ENCODE measurements at regions of chr4 and their contacts with region 1.

Region 1: DNA sequence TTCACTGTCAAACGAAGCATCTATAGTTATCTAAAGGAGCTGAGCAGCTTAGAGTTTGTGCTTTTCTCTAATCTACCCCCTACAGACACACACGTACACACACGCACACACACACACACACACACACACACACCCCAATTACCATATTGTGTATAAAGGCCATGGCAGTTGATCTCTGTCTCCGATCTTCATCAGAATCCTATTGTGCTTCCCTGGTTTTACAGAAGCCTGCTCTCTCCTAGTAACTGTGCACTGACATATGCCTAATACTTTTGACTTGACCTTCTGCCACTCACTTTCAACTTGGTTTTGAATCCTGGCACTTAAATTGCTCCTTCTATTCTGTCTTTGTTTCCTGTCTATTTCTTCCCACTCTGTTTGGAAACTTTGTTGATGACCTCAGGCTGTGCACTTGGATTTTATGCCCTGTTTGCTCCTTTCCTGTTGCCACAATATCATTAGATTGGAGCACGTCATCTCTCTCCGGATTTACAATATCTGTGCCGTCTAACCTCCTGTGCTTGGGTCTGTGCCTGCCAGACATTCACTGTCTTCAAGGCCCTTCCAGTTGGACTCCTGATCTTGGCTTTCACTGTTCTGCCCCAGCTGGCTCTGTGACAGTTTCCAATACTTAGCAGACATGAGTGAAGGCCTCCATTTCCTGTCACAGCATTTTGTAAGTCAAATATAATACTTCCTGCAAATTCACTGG is 928.1 kb downstream of the FAT4 start:
- DNase-seq: peak; percentile 10
- H3K4me3 ChIP-seq: no peak overlapping the region
- H3K27ac ChIP-seq: no peak overlapping the region
- H3K4me1 ChIP-seq: no peaks in the 10 kb centered on the region; the same call in 1 of the 2 replicates
- H3K27me3 ChIP-seq: no peaks in the 10 kb centered on the region

Region 2: GRCh38 chr4:125891597-125892258 is 351.1 kb before region 1 on chr4:
- in situ Hi-C with region 1: no loop called
- DNase-seq: peak; percentile 88
- H3K4me3 ChIP-seq: 0 out of 2 replicates have a peak overlapping the region, but pooled peaks have one; percentile 14
- H3K27ac ChIP-seq: peak overlapping the region; percentile 39
- H3K4me1 ChIP-seq: peaks cover 18% of the 10 kb centered on the region
- H3K27me3 ChIP-seq: no peaks in the 10 kb centered on the region

Region 3: DNA sequence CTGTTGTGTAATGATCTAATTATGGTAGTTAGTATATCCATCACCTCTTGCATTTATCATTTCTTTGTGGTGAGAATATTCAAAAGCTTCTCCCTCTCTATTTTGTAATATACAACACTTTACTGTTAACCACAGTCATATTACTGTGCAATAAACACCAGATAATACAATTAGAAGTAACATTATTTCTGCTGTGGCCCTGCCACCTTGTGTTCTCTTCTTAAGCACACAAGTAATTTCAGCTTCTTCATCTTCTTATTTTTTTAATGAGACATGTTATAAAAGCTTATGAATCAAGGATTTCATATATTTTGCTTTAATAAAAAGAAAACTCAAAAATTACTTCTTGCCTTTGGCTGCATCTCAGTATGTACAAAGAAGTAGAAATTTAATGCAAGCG is 714.7 kb after region 1 on chr4:
- in situ Hi-C with region 1: loop called (anchors 25 kb)
- DNase-seq: peak; percentile 53
- H3K4me3 ChIP-seq: no peak overlapping the region
- H3K27ac ChIP-seq: no peak overlapping the region
- H3K4me1 ChIP-seq: 0 out of 2 replicates have a peak, but pooled peaks cover 4% of the 10 kb centered on the region
- H3K27me3 ChIP-seq: no peaks in the 10 kb centered on the region

Measured in GM23248 (cell line).